ENCODE measurements at regions of chr4 and their contacts with region 1.

Region 1: GRCh38 chr4:140861359-140862176 is 105.4 kb upstream of the TBC1D9 start:
- DNase-seq: peak; percentile 75 to 76
- H3K4me3 ChIP-seq: no peak overlapping the region
- H3K27ac ChIP-seq: no peak overlapping the region
- H3K4me1 ChIP-seq: no peaks in the 10 kb centered on the region
- H3K27me3 ChIP-seq: no peaks in the 10 kb centered on the region
- CTCF ChIP-seq: peak; percentile 45 to 94 (median 71)
- POLR2A ChIP-seq: no peak

Region 2: GRCh38 chr4:139682741-139683151 is 1178.8 kb before region 1 on chr4:
- intact Hi-C with region 1: no loop called
- DNase-seq: no peak
- H3K4me3 ChIP-seq: no peak overlapping the region
- H3K27ac ChIP-seq: no peak overlapping the region
- H3K4me1 ChIP-seq: peaks cover 0 to 13% of the 10 kb centered on the region in 2 donors
- H3K27me3 ChIP-seq: no peaks in the 10 kb centered on the region
- CTCF ChIP-seq: no peak
- POLR2A ChIP-seq: no peak

Region 3: GRCh38 chr4:141028024-141028529 is 166.5 kb after region 1 on chr4:
- intact Hi-C with region 1: no loop called
- DNase-seq: no peak
- H3K4me3 ChIP-seq: no peak overlapping the region
- H3K27ac ChIP-seq: peak overlapping the region in 1 of 3 donors; percentile 44
- H3K4me1 ChIP-seq: peaks cover 16 to 18% of the 10 kb centered on the region in 2 donors
- H3K27me3 ChIP-seq: no peaks in the 10 kb centered on the region
- CTCF ChIP-seq: no peak
- POLR2A ChIP-seq: no peak

Region 4: GRCh38 chr4:141133146-141133998 is 271.8 kb after region 1 on chr4 and contains the start of gene RNF150:
- intact Hi-C with region 1: loop called (anchors 5 kb)
- DNase-seq: peak; percentile 87 to 88
- H3K4me3 ChIP-seq: peak within 1 kb of the TSS; percentile 37 to 88 (median 73)
- H3K27ac ChIP-seq: peak within 1 kb of the TSS; percentile 51 to 90 (median 87)
- H3K4me1 ChIP-seq: peaks cover 4 to 16% of the 10 kb centered on the region in 2 donors
- H3K27me3 ChIP-seq: no peaks in the 10 kb centered on the region
- CTCF ChIP-seq: peak; percentile 22 to 96 (median 74)
- POLR2A ChIP-seq: peak in 1 of 2 donors; percentile 75
- total RNA-seq, gene RNF150: 10.2 to 34.5 (median 24.2) TPM